ENCODE measurements at regions of chr9 and their contacts with region 1.

Region 1: DNA sequence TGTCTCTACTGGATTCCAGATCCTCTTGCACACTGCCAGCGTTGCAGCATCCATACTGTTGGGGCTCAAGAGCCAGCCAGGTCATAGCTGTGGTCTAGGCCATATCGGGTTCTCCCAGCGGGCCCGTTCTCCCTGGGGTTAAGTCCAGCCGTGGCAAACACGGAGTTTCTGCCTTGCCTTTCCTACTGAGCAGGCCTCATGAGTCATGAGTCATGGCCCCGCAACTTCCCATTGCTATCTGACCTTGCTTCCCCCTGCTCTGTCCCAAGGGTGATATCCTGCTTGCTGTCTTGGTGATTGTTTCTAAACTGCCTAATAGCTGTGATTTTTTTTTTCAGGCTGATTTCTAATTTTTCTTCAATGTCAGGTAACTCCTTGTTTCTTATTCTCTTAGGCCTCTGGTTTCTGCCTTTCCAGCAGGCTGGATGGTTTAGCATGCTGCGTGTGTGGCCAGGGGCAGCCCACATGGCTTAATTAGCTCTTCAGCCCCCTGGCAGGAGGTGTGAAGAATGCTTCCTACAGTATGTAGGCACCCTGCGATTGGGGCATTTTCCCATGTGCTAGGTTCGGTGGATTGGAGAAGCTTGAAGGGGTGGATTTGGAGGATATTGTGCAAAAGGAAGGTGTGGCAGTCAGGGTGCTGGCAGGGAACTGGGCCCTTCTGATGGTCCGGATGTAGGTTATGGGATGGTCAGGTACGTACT is 18.7 kb downstream of the DAPK1 start:
- DNase-seq: peak; percentile 94 to 97 (median 97)
- H3K4me3 ChIP-seq: peak overlapping the region in 1 of 3 experiments; percentile 52
- H3K4me3 Mint-ChIP-seq: peak overlapping the region; percentile 18 to 87
- H3K27ac ChIP-seq: peak overlapping the region; percentile 88
- H3K27ac Mint-ChIP-seq: peak overlapping the region; percentile 93 to 99 (median 98)
- H3K4me1 ChIP-seq: peaks cover 79 to 83% of the 10 kb centered on the region in 2 donors
- H3K4me1 Mint-ChIP-seq: peaks cover 85% of the 10 kb centered on the region
- H3K27me3 ChIP-seq: no peaks in the 10 kb centered on the region
- H3K27me3 Mint-ChIP-seq: peaks cover 0 to 2% (median 0%) of the 10 kb centered on the region in 3 donors
- CTCF ChIP-seq: no peak

Region 2: GRCh38 chr9:87502436-87503221 is 13.7 kb before region 1 on chr9:
- intact Hi-C with region 1: loop called in 1 of 2 experiments (anchors 2 kb)
- DNase-seq: peak; percentile 85 to 94 (median 90)
- H3K4me3 ChIP-seq: peak overlapping the region in 2 of 3 experiments; percentile 13 to 51
- H3K4me3 Mint-ChIP-seq: peak overlapping the region; percentile 60 to 78
- H3K27ac ChIP-seq: peak overlapping the region; percentile 77 to 93
- H3K27ac Mint-ChIP-seq: peak overlapping the region; percentile 92 to 97 (median 94)
- H3K4me1 ChIP-seq: peaks cover 53 to 57% of the 10 kb centered on the region in 2 donors
- H3K4me1 Mint-ChIP-seq: peaks cover 63% of the 10 kb centered on the region
- H3K27me3 ChIP-seq: no peaks in the 10 kb centered on the region
- H3K27me3 Mint-ChIP-seq: peaks cover 0 to 2% (median 0%) of the 10 kb centered on the region in 3 donors
- CTCF ChIP-seq: no peak

Region 3: GRCh38 chr9:87599901-87600610 is 83.7 kb after region 1 on chr9:
- intact Hi-C with region 1: no loop called
- DNase-seq: no peak
- H3K4me3 ChIP-seq: no peak overlapping the region
- H3K4me3 Mint-ChIP-seq: no peak overlapping the region
- H3K27ac ChIP-seq: peak overlapping the region; percentile 81 to 97
- H3K27ac Mint-ChIP-seq: peak overlapping the region; percentile 16 to 97 (median 95)
- H3K4me1 ChIP-seq: peaks cover 36 to 58% of the 10 kb centered on the region in 2 donors
- H3K4me1 Mint-ChIP-seq: peaks cover 78% of the 10 kb centered on the region
- H3K27me3 ChIP-seq: no peaks in the 10 kb centered on the region
- H3K27me3 Mint-ChIP-seq: peaks cover 0 to 7% (median 0%) of the 10 kb centered on the region in 3 donors
- CTCF ChIP-seq: no peak

Region 4: GRCh38 chr9:87613265-87614111 is 97.1 kb after region 1 on chr9:
- intact Hi-C with region 1: loop called in 1 of 2 experiments (anchors 5 kb)
- DNase-seq: peak; percentile 54 to 60 (median 59)
- H3K4me3 ChIP-seq: peak overlapping the region in 1 of 3 experiments; percentile 37
- H3K4me3 Mint-ChIP-seq: peak overlapping the region in 1 of 2 donors; percentile 69
- H3K27ac ChIP-seq: peak overlapping the region; percentile 57 to 93
- H3K27ac Mint-ChIP-seq: peak overlapping the region; percentile 90 to 97 (median 93)
- H3K4me1 ChIP-seq: peaks cover 57 to 82% of the 10 kb centered on the region in 2 donors
- H3K4me1 Mint-ChIP-seq: peaks cover 88% of the 10 kb centered on the region
- H3K27me3 ChIP-seq: no peaks in the 10 kb centered on the region
- H3K27me3 Mint-ChIP-seq: peaks cover 0 to 3% (median 1%) of the 10 kb centered on the region in 3 donors
- CTCF ChIP-seq: no peak

Region 5: GRCh38 chr9:87959916-87960581 is 443.7 kb after region 1 on chr9:
- intact Hi-C with region 1: no loop called
- DNase-seq: no peak
- H3K4me3 ChIP-seq: no peak overlapping the region
- H3K4me3 Mint-ChIP-seq: no peak overlapping the region
- H3K27ac ChIP-seq: no peak overlapping the region
- H3K27ac Mint-ChIP-seq: no peak overlapping the region
- H3K4me1 ChIP-seq: no peaks in the 10 kb centered on the region
- H3K4me1 Mint-ChIP-seq: no peaks in the 10 kb centered on the region
- H3K27me3 ChIP-seq: peaks cover 0 to 9% of the 10 kb centered on the region in 2 donors
- H3K27me3 Mint-ChIP-seq: peaks cover 10 to 20% (median 12%) of the 10 kb centered on the region in 3 donors
- CTCF ChIP-seq: no peak

Measured in CD14-positive monocyte (primary cell).